ENCODE measurements at regions of chr1 and their contacts with region 1.

Region 1: DNA sequence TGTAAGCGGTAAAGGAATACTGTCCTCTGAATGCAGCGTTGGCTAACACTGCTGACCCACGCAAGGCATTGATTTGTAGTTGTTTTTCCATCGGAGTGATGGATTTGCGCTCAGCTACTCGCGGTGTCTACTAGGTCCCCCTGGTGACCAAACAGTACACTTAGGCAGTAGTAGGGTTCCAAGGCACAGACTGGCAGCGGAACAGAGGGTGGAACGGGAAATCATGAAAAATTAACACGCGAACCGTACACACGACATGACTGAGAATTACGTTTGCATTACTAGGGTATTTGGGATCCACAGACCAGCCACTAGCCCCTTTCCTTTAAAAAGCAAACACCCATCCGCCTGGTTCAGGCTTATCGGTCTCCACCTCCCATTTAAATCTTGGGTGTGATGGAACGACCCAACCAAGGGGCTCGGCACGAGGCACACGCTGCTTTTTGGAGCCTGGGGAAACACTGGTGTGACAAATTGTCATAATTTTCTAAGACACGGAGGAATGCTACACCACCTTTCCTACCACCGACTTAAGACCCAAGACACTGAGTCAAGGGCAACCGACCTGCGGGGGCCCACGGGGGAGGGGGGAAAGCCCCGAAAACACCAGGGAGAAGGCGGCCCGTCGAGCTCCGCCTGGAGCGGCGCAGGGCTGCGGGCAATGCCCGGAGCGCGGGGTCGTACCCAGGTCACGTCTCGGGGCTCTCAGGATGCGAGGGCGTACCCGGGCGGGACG is 699 bp downstream of the DIPK1A start:
- DNase-seq: no peak
- ATAC-seq: peak; percentile 49
- H3K4me3 Mint-ChIP-seq: peak overlapping the region; percentile 96
- H3K27ac Mint-ChIP-seq: peak overlapping the region; percentile 98
- H3K4me1 Mint-ChIP-seq: peaks cover 46% of the 10 kb centered on the region
- H3K27me3 Mint-ChIP-seq: no peaks in the 10 kb centered on the region
- CTCF ChIP-seq: no peak

Region 2: GRCh38 chr1:92831762-92832536 is 128.6 kb before region 1 on chr1 and contains the start of gene RPL5:
- CTCF ChIA-PET with region 1: interaction called, 11 read pairs
- POLR2A ChIA-PET with region 1: interaction called, 25 read pairs
- intact Hi-C with region 1: loop called (anchors 1 kb)
- DNase-seq: peak; percentile 98
- ATAC-seq: peak; percentile 90
- H3K4me3 Mint-ChIP-seq: peak within 1 kb of the TSS; percentile 99
- H3K27ac Mint-ChIP-seq: peak within 1 kb of the TSS; percentile 97
- H3K4me1 Mint-ChIP-seq: peaks cover 48% of the 10 kb centered on the region
- H3K27me3 Mint-ChIP-seq: no peaks in the 10 kb centered on the region
- CTCF ChIP-seq: no peak
- total RNA-seq, gene RPL5: 1,685 and 1,766 TPM in 2 replicates

Region 3: DNA sequence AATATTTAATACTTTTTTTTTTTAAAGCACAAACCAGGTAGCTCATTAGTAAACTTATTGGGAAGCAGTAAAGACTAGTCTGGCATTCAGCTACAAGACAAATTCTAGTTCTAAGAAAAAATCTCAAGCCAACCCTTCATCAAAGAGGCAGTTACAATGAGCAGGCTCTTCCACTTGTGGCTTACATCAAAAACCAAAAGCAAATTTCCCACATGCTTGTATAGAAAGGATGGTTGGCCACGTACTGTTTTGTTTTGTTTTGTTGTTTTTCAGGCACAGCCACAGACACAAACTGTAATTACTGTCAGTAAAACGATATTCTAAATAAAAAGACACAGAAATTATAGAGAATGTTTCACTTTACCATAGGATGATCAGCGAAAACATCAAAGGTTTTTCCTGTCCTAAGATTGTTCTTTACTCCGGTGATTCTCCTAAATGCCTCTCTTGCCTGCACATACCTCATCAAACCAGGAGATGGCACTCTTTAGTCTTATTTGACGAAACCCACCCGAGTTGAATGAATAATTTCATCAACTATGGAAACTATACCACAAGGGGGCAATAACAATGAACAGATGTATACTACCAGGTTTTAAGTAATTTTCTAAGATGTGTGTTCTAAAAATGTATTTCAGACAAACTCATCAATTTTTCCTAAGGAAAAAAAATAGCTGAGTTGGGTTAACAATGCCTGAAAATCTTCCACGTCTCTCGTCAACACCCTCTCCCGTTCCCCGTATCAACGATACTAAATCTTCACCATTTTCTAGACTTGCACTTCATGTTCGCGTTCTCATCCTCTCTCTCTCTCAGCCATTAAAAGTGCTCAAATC is 101.8 kb before region 1 on chr1:
- CTCF ChIA-PET with region 1: interaction called, 89 read pairs
- POLR2A ChIA-PET with region 1: interaction called, 24 read pairs
- intact Hi-C with region 1: loop called (anchors 1 kb)
- DNase-seq: no peak
- ATAC-seq: peak; percentile 97
- H3K4me3 Mint-ChIP-seq: no peak overlapping the region
- H3K27ac Mint-ChIP-seq: no peak overlapping the region
- H3K4me1 Mint-ChIP-seq: peaks cover 14% of the 10 kb centered on the region
- H3K27me3 Mint-ChIP-seq: no peaks in the 10 kb centered on the region
- CTCF ChIP-seq: peak; percentile 100

Region 4: GRCh38 chr1:92929461-92929860 is 31.1 kb before region 1 on chr1:
- CTCF ChIA-PET with region 1: interaction called, 6 read pairs
- POLR2A ChIA-PET with region 1: interaction called, 7 read pairs
- intact Hi-C with region 1: loop called (anchors 5 kb)
- DNase-seq: no peak
- ATAC-seq: peak; percentile 50
- H3K4me3 Mint-ChIP-seq: peak overlapping the region; percentile 62
- H3K27ac Mint-ChIP-seq: peak overlapping the region; percentile 80
- H3K4me1 Mint-ChIP-seq: peaks cover 83% of the 10 kb centered on the region
- H3K27me3 Mint-ChIP-seq: no peaks in the 10 kb centered on the region
- CTCF ChIP-seq: no peak

Region 5: GRCh38 chr1:92980732-92981647 is 20.4 kb after region 1 on chr1:
- CTCF ChIA-PET with region 1: interaction called, 41 read pairs
- POLR2A ChIA-PET with region 1: interaction called, 375 read pairs
- intact Hi-C with region 1: no loop called
- DNase-seq: no peak
- ATAC-seq: peak; percentile 59
- H3K4me3 Mint-ChIP-seq: peak overlapping the region; percentile 55
- H3K27ac Mint-ChIP-seq: peak overlapping the region; percentile 94
- H3K4me1 Mint-ChIP-seq: peaks cover 67% of the 10 kb centered on the region
- H3K27me3 Mint-ChIP-seq: no peaks in the 10 kb centered on the region
- CTCF ChIP-seq: no peak

Region 6: GRCh38 chr1:94541175-94542087 is 1580.9 kb after region 1 on chr1 and contains the start of gene F3:
- CTCF ChIA-PET with region 1: no interaction called
- POLR2A ChIA-PET with region 1: no interaction called
- intact Hi-C with region 1: no loop called
- DNase-seq: peak; percentile 49
- ATAC-seq: peak; percentile 94
- H3K4me3 Mint-ChIP-seq: peak within 1 kb of the TSS; percentile 79
- H3K27ac Mint-ChIP-seq: no peak within 1 kb of the TSS
- H3K4me1 Mint-ChIP-seq: peaks cover 22% of the 10 kb centered on the region
- H3K27me3 Mint-ChIP-seq: peaks cover 53% of the 10 kb centered on the region
- CTCF ChIP-seq: no peak
- total RNA-seq, gene F3: 0.40 and 0.76 TPM in 2 replicates